Heart left ventricle (tissue), 16 donors: ENCODE measurements at regions of chr15 and their contacts with region 1.

Region 1: DNA sequence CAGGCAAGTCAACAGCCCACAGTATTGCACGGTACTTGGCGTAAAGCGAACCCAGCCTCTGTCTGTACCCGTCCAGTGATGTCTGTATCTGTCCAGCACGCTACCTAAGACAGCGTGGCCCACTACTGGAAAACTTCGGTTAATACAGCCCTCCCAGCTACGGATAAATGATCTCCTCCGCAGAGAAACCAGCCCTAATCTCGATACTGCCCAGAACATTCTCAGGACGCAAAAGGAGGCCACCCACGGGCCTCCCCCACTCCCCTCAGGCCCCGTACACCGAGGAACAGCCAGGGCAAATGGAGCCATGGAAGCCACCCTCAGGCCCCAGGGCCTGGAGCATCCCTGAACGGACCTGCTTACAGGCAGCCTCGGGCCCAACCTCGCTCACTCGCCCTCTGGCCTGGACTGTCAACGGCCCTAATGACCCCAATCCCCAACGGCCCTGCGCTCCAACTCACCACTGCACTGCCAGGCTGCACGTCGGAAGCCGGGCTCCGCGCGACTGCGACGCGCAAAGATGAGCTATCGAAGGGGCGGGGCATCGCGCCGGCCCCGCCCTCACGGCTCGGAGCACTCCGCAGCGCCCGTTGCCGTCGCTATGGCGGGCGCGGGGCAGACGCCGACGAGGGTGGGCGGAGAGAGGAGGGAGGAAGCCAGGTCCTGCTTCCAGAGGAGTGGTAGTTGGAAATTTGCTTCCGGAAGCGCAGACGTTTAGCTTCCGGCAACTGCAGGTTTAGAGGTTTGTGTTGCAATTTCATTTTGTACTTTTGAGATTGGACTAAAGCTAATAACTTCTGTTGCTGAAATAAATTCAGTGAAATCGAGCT is at the start of gene SKIC8:
- DNase-seq: peak; percentile 91 to 96 (median 94)
- ATAC-seq: peak; percentile 99 to 100 (median 99)
- H3K4me3 ChIP-seq: peak within 1 kb of the TSS; percentile 64 to 98 (median 87)
- H3K27ac ChIP-seq: peak within 1 kb of the TSS; percentile 4 to 87 (median 76)
- H3K4me1 ChIP-seq: peaks cover 0 to 19% (median 10%) of the 10 kb centered on the region in 12 donors
- H3K27me3 ChIP-seq: peaks cover 0 to 8% (median 0%) of the 10 kb centered on the region in 9 donors
- CTCF ChIP-seq: no peak
- POLR2A ChIP-seq: peak in 1 of 2 donors; percentile 71
- total RNA-seq, gene SKIC8: 20.8 to 34.4 (median 27.8) TPM

Region 2: GRCh38 chr15:78263907-78264303 is 35.4 kb before region 1 on chr15:
- intact Hi-C with region 1: loop called in 1 of 10 experiments (anchors 1 kb)
- DNase-seq: no peak
- ATAC-seq: peak in 2 of 4 donors; percentile 1 to 6
- H3K4me3 ChIP-seq: peak overlapping the region in 11 of 12 donors; percentile 53 to 91 (median 71)
- H3K27ac ChIP-seq: peak overlapping the region; percentile 43 to 96 (median 88)
- H3K4me1 ChIP-seq: peaks cover 0 to 39% (median 17%) of the 10 kb centered on the region in 12 donors
- H3K27me3 ChIP-seq: no peaks in the 10 kb centered on the region
- CTCF ChIP-seq: no peak
- POLR2A ChIP-seq: no peak

Region 3: DNA sequence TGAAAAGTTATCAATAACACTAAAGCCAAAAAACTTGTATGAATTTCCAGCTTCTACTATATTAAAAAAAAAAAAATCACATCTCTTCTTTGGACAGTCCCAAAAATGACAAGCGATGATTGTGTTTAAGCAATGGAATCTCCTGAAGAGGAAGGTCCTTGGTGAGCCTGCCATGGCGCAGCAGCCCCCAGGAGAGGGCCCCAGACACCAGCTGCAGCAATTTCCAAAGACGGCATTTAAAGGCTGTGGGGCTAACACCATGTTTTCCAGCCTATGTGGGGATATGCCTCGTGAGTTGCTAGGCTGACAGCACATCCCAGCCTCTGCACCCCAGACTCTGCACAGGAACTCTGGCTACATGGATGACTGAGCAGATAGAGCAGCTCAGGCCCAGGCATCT is 14.6 kb before region 1 on chr15:
- intact Hi-C with region 1: no loop called
- DNase-seq: no peak
- ATAC-seq: no peak
- H3K4me3 ChIP-seq: no peak overlapping the region
- H3K27ac ChIP-seq: no peak overlapping the region
- H3K4me1 ChIP-seq: peaks cover 0 to 7% (median 0%) of the 10 kb centered on the region in 12 donors
- H3K27me3 ChIP-seq: no peaks in the 10 kb centered on the region
- CTCF ChIP-seq: no peak
- POLR2A ChIP-seq: no peak